OCI-LY7 (cell line): ENCODE measurements at regions of chr2 and their contacts with region 1.

Region 1: GRCh38 chr2:131004446-131005209 is 88.6 kb downstream of the FAM168B start:
- DNase-seq: no peak
- H3K4me3 ChIP-seq: no peak overlapping the region
- H3K27ac ChIP-seq: no peak overlapping the region
- H3K4me1 ChIP-seq: no peaks in the 10 kb centered on the region
- CTCF ChIP-seq: no peak

Region 2: DNA sequence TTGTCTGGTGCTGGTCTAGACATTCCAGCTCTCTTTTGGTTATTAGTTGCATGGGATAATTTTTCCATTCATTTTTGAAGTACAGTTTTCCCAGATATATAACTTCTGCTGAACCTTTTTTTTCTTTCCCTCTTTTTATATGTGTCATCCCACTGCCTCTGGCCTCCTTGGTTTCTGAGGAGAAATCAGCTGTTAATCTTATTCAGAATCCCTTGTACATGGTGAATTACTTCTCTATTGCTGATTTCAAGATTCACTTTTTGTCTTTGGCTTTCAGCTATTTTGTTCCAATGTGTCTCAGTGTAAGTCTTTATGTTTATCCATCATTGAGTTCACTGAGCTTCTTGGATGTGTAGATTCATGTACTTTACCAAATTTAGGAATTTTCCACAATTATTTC is 68.2 kb before region 1 on chr2:
- CTCF ChIA-PET with region 1: interaction called, 11 read pairs
- POLR2A ChIA-PET with region 1: no interaction called
- intact Hi-C with region 1: no loop called
- DNase-seq: no peak
- H3K4me3 ChIP-seq: no peak overlapping the region
- H3K27ac ChIP-seq: no peak overlapping the region
- H3K4me1 ChIP-seq: no peaks in the 10 kb centered on the region
- CTCF ChIP-seq: no peak

Region 3: DNA sequence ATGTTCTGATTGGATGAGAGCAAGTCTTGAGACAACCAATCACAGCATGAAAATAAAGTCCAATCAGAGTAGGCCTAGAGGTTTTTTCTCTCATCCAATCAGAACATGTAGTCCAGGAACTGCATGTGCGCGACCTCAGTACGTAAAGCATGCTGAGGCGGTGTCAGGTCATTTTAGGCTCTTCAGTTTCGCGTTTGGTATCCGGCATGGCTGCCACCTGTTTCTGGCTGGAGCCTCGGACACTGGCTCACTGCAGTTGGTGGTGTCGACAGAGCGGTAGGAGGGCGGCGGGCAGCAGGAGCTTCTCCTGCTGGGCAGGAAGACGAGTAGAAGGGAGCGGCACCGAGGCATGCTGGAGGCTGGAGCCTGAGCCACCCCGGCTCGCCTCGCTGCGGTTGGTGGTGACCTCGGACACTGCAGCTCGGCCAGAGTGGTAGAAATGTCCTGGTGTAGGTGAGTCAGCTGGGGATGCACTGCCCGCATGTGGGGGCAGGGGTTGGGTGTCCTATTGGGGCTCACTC is 538.8 kb after region 1 on chr2:
- CTCF ChIA-PET with region 1: no interaction called
- POLR2A ChIA-PET with region 1: no interaction called
- intact Hi-C with region 1: no loop called
- DNase-seq: no peak
- H3K4me3 ChIP-seq: no peak overlapping the region
- H3K27ac ChIP-seq: no peak overlapping the region
- H3K4me1 ChIP-seq: no peaks in the 10 kb centered on the region
- CTCF ChIP-seq: no peak